Cardiac septum (tissue), 1 donor: ENCODE measurements at regions of chr5 and their contacts with region 1.

Region 1: GRCh38 chr5:82356808-82357671 is 78.9 kb upstream of the RPS23 start:
- DNase-seq: peak; percentile 90

Region 2: DNA sequence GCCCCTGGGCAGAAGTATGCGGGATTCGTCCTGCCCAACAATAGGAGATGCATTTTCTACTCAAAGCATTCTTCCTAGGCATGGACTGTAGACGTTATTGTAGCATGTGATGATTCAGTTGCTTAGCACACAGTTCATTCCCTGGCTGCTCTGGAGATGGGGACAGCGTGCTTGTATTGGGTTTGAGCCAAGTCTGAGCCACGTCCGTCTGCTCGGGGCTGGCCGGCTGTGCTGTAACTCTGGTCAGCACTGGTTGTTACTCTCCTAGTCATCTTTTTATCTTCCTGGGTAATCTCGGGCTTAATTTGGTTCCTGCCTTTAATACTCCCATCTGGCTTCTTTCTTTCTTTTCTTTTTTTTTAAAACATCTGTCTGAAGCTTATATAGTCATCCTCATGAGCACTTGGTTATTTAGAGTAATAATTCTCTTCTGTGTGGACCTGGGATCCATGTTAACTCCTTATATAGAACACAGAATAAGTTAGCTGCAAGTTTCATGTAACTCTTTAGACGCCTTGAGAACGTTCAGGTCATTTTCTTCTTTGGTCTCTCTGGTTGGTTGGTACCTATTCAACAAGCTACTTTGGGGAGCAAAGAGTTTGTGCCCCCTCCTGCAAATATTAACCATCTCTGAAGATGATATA is 40.0 kb after region 1 on chr5:
- intact Hi-C with region 1: loop called (anchors 5 kb)
- DNase-seq: peak; percentile 83

Region 3: GRCh38 chr5:82406205-82406773 is 49.2 kb after region 1 on chr5:
- intact Hi-C with region 1: loop called (anchors 1 kb)
- DNase-seq: no peak

Region 4: DNA sequence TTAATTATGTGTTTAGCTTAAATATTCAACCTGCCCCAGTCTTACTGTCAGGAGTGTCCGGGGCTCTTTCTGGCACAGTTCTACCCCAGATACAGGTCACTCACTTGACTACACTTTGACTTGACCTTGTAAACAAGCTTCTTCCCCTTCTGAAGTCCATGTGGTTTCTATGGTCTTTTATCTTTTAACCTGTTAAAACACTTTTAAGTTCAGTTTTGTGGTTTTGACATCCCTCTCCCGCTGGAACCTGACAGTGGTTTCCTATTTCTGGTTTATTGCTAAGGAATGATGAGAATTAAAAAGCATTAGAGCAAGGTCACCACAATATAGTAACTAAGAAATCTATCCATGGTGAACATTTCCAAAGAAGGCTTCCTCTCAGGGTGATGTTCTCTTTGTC is 420.1 kb after region 1 on chr5:
- intact Hi-C with region 1: no loop called
- DNase-seq: no peak